Activated CD4-positive, alpha-beta memory T cell treated with anti-CD3 and anti-CD28 coated beads for 36 hours (primary cell): ENCODE measurements at regions of chr16 and their contacts with region 1.

Region 1: GRCh38 chr16:58129097-58129936 is at the start of gene CFAP20:
- DNase-seq: peak; percentile 98
- H3K4me3 Mint-ChIP-seq: peak within 1 kb of the TSS; percentile 86
- H3K27ac Mint-ChIP-seq: peak within 1 kb of the TSS; percentile 82
- H3K4me1 Mint-ChIP-seq: peaks cover 38% of the 10 kb centered on the region
- H3K27me3 Mint-ChIP-seq: no peaks in the 10 kb centered on the region
- total RNA-seq, gene CFAP20: 37.2 to 38.6 TPM

Region 2: GRCh38 chr16:57810197-57811031 is 318.9 kb before region 1 on chr16:
- CTCF ChIA-PET with region 1: no interaction called
- POLR2A ChIA-PET with region 1: no interaction called
- intact Hi-C with region 1: loop called (anchors 5 kb)
- DNase-seq: peak; percentile 89
- H3K4me3 Mint-ChIP-seq: peak overlapping the region; percentile 28
- H3K27ac Mint-ChIP-seq: peak overlapping the region; percentile 53
- H3K4me1 Mint-ChIP-seq: peaks cover 25% of the 10 kb centered on the region
- H3K27me3 Mint-ChIP-seq: peaks cover 8% of the 10 kb centered on the region

Region 3: DNA sequence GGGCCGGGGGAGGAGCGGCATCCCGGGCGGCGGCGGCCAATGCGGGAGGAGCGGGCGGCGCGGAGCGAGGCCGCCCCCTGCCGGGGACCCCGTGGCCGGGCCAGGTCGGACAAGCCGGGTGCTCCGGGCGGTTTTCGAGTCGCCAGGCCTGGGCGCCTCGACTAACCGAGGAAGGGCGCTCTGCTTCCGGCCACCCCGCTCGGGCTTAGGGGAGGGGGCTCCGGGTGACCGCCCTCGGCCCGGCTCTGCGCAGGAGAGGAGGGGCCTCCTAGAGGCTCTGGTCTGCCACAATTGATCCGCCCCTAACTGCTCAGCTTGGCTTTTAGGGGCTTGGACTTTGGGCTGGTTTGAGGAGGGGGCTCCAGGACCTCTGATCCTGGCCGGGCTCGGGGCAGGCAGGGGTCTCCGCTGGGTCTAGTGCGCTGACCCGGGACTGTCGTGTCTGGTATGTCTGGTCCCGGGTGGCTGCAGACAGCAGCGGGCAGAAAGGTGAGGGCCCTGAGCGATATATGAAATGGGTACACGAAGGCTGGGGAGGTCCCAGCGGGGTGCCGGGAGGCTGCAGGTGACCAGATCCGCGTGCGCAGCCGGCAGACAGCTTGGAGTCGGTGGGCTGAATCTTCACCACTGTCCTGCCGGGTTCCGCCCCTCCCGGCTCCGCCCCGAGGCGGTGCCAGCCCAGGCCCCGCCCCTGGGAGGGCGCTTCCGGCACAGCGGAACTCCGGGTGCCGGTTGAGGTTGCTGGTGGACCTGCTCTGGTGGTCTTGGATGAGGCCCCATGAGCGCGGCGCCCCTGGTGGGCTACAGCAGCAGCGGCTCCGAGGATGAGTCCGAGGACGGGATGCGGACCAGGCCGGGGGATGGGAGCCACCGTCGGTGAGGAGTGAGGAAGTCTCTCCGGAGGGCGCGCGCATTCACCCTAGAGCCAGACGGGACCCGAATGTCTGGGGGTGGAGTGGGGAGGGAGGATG is 128.3 kb before region 1 on chr16 and contains the start of gene USB1:
- CTCF ChIA-PET with region 1: no interaction called
- POLR2A ChIA-PET with region 1: interaction called, 9 read pairs
- intact Hi-C with region 1: loop called (anchors 1 kb)
- DNase-seq: peak; percentile 87
- H3K4me3 Mint-ChIP-seq: peak within 1 kb of the TSS; percentile 91
- H3K27ac Mint-ChIP-seq: peak within 1 kb of the TSS; percentile 81
- H3K4me1 Mint-ChIP-seq: peaks cover 52% of the 10 kb centered on the region
- H3K27me3 Mint-ChIP-seq: no peaks in the 10 kb centered on the region
- total RNA-seq, gene USB1: 42.2 to 46.0 TPM

Region 4: DNA sequence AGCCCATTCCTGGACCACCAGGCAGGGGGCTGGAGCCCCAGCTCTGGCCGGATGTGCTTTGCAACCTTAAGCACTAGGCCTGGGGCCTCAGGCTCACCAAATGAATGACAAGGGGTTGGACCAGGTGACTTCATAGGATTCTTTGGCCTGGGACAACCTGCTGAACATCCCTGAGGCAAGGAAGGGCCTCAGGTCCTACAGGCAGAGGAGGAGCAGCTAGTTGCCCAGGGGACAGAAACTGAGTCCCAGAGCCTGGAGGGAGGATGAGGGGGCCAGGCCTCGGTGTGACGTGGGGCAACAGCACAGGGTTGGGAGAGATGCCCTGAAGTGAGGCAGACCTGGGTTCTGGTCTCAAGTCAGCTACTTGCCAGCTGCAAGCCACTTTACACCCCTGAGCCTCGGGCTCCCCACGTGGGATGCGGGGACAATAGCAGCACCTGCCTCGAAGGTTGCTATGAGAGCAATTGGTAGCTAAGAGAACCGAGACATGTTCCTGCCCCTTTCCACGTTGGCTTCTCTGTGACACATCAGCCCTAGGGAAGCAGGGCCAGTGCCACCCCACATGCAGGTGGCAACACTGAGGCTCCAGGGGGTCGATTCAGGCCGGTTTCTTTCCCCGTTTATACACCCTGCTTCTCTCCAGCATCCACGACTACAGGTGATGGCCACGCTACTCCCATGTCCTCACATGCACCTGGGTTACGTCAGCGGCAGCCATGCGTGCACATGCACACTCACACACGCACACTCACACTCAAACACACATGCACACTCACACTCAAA is 42.7 kb before region 1 on chr16:
- CTCF ChIA-PET with region 1: no interaction called
- POLR2A ChIA-PET with region 1: no interaction called
- intact Hi-C with region 1: no loop called
- DNase-seq: no peak
- H3K4me3 Mint-ChIP-seq: no peak overlapping the region
- H3K27ac Mint-ChIP-seq: no peak overlapping the region
- H3K4me1 Mint-ChIP-seq: no peaks in the 10 kb centered on the region
- H3K27me3 Mint-ChIP-seq: no peaks in the 10 kb centered on the region

Region 5: DNA sequence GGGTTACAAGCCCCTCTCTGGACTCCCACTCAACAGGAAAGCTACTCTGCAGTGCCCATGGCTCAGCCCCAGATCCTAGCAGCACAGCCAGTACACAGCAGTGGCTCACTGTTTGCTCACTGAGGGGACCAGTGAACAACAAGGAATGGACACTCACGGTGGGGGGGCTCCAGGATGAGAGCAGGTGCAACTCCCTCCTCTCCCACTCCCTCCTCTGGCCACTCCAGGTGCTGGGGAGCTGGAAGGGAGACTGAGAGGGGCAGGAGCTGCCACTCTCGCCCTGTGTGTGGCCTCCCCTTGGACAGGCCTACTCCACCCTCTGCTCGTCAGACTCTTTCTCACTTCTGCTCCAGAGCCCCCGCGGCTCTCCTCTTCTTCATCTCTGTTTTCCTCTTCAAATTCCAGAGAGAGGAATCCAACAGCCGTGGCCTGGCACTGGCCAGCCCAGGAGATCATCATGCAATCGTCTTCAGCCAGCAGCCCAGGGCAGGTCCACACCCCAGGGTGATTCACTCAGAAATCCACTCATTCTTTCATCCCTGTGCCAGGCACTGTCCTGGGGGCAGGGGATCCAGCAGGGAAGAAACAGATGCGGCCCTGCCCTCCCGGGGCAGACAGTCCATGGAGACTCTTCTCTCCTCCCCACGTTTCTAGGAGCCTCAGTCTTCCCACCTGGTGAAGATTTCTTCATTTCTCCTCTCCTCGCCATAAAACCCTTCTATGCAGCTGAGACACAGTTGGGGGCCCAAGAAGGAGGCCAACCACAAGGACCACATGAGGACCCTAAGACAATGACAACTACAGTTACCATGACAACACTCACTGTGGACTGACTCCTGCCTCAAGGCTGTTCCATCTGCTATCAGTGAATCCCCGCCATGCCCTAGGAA is 30.9 kb before region 1 on chr16:
- CTCF ChIA-PET with region 1: interaction called, 7 read pairs
- POLR2A ChIA-PET with region 1: no interaction called
- intact Hi-C with region 1: loop called (anchors 2 kb)
- DNase-seq: no peak
- H3K4me3 Mint-ChIP-seq: no peak overlapping the region
- H3K27ac Mint-ChIP-seq: no peak overlapping the region
- H3K4me1 Mint-ChIP-seq: no peaks in the 10 kb centered on the region
- H3K27me3 Mint-ChIP-seq: peaks cover 2% of the 10 kb centered on the region

Region 6: GRCh38 chr16:58249780-58250478 is 120.6 kb after region 1 on chr16:
- CTCF ChIA-PET with region 1: no interaction called
- POLR2A ChIA-PET with region 1: no interaction called
- intact Hi-C with region 1: loop called (anchors 1 kb)
- DNase-seq: peak; percentile 90
- H3K4me3 Mint-ChIP-seq: peak overlapping the region; percentile 88
- H3K27ac Mint-ChIP-seq: no peak overlapping the region
- H3K4me1 Mint-ChIP-seq: peaks cover 13% of the 10 kb centered on the region
- H3K27me3 Mint-ChIP-seq: peaks cover under 1% of the 10 kb centered on the region

Region 7: DNA sequence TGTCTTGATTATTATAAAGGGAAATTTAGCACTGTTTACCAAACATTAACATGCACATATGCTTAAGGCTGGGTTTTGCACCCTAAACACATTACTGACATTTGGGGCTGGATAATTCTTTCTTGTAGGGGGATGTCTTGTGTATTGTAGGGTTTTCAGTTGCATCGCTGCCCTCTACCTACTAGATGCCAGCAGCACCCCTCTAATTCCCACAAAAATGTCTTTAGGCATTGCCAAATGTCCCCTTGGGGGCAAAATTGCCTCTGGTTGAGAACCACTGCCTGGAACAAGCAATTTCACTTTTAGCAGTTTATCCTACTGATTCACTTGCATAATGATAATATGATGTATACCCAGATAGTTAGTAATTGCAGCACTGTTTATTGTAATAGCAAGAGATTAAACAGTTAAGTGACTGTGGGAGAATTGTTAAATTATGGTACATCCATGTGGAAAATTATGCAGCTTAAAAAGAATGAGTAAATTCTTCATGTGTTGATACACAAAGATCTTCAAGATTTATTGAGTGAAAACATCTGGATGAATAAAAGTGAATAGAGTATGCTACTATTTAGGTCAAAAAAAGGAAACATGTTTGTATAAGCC is 147.1 kb after region 1 on chr16:
- CTCF ChIA-PET with region 1: no interaction called
- POLR2A ChIA-PET with region 1: no interaction called
- intact Hi-C with region 1: no loop called
- DNase-seq: no peak
- H3K4me3 Mint-ChIP-seq: no peak overlapping the region
- H3K27ac Mint-ChIP-seq: no peak overlapping the region
- H3K4me1 Mint-ChIP-seq: no peaks in the 10 kb centered on the region
- H3K27me3 Mint-ChIP-seq: peaks cover 17% of the 10 kb centered on the region

Region 8: GRCh38 chr16:58629572-58630104 is 500.3 kb after region 1 on chr16 and contains the start of gene CNOT1:
- CTCF ChIA-PET with region 1: no interaction called
- POLR2A ChIA-PET with region 1: no interaction called
- intact Hi-C with region 1: loop called (anchors 1 kb)
- DNase-seq: peak; percentile 99
- H3K4me3 Mint-ChIP-seq: peak within 1 kb of the TSS; percentile 89
- H3K27ac Mint-ChIP-seq: peak within 1 kb of the TSS; percentile 99
- H3K4me1 Mint-ChIP-seq: peaks cover 26% of the 10 kb centered on the region
- H3K27me3 Mint-ChIP-seq: peaks cover 1% of the 10 kb centered on the region
- total RNA-seq, gene CNOT1: 230 to 242 TPM